WTC11 (cell line): ENCODE measurements at regions of chr5 and their contacts with region 1.

Region 1: GRCh38 chr5:141557681-141558136 is 61.1 kb downstream of the DIAPH1 start:
- DNase-seq: peak; percentile 85
- ATAC-seq: peak; percentile 57
- H3K4me3 Mint-ChIP-seq: peak overlapping the region; percentile 61
- H3K27ac Mint-ChIP-seq: peak overlapping the region; percentile 97
- H3K4me1 Mint-ChIP-seq: peaks cover 38% of the 10 kb centered on the region
- H3K27me3 Mint-ChIP-seq: no peaks in the 10 kb centered on the region
- CTCF ChIP-seq: peak; percentile 92

Region 2: DNA sequence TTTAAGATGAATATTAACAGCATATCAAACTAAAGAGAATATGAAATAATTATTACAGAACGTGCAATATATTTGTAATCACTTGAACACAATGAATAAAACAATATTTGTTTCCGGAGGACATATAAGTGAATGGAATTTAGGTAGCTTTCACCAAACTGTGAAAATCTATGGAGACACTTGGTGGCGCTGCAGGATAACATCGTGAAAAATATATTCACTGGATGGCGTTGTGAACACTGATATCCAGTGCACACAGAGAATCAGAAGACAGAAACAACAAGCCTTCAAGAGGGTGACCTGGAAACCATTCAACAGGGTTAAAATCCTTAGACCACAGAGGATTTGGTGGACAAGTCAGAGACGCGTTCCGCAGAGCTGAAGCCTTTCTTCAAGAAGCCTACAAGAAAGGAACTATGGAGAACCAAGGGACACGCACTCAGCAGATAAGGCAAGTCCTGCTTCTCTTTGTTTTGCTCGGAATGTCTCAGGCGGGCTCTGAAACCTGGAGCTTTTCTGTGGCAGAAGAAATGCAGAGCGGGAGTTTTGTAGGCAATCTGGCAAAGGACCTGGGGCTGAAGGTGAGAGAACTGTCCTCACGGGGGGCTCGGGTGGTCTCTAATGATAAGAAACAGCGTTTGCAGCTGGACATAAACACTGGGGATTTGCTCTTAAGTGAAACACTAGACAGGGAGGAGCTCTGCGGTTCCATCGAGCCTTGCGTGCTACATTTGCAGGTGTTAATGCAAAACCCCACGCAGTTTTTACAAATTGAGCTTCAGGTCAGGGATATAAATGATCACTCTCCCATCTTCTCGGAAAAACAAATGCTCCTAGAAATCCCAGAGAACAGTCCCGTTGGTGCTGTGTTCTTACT is 358.1 kb before region 1 on chr5 and contains the start of gene PCDHB11:
- CTCF ChIA-PET with region 1: interaction called, 12 read pairs
- POLR2A ChIA-PET with region 1: no interaction called
- DNase-seq: no peak
- ATAC-seq: peak; percentile 67
- H3K4me3 Mint-ChIP-seq: peak within 1 kb of the TSS; percentile 24
- H3K27ac Mint-ChIP-seq: no peak within 1 kb of the TSS
- H3K4me1 Mint-ChIP-seq: peaks cover 7% of the 10 kb centered on the region
- H3K27me3 Mint-ChIP-seq: no peaks in the 10 kb centered on the region; the same call in 1 of the 2 replicates
- CTCF ChIP-seq: peak; percentile 32; the same call in 1 of the 2 replicates
- total RNA-seq, gene PCDHB11: 0.61 to 1.2 TPM (median 0.92 TPM) in 3 replicates

Region 3: DNA sequence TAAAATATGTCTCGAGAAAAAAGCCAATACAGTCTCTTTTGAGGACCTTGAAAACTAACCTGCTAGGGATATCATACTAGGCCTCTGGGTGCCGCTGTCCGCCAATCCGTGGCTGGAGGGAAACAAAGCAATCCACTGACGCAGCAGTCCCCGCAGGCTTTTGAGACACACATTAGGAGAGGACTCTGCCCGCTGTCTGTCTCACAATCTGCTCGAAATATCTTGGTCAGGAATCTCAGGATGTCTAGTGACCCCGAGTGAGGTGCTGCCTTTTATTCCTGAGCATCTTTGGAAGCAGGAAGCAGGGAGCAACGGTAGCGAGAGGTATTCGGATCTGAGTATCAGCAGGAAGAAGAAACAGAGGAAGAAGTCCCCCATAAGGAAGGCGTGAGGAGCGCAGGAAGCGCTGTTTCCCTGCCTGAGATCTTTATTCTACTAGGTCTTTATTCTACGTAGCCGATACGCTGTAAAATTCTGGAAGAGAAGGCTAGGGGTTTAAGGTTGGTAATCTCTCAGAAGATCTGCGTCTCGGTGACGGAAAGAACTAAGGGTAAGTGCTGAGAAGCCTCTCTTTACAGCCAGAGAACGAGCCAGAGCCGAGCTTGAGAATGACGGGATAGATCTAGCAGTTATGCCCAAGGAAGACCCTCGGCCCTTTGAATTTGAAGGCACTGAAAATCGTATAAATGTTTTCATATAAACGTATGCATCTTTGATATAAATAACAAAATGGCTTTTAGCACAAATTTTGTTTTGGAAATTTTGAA is 231.4 kb before region 1 on chr5:
- CTCF ChIA-PET with region 1: interaction called, 10 read pairs
- POLR2A ChIA-PET with region 1: no interaction called
- DNase-seq: peak; percentile 76
- ATAC-seq: peak; percentile 91
- H3K4me3 Mint-ChIP-seq: peak overlapping the region; percentile 90
- H3K27ac Mint-ChIP-seq: peak overlapping the region; percentile 98
- H3K4me1 Mint-ChIP-seq: peaks cover 7% of the 10 kb centered on the region
- H3K27me3 Mint-ChIP-seq: peaks cover 12% of the 10 kb centered on the region
- CTCF ChIP-seq: peak; percentile 43; the same call in 1 of the 2 replicates

Region 4: GRCh38 chr5:141402553-141403260 is 155.0 kb before region 1 on chr5 and contains the start of gene PCDHGA9:
- CTCF ChIA-PET with region 1: interaction called, 24 read pairs
- POLR2A ChIA-PET with region 1: no interaction called
- DNase-seq: no peak
- ATAC-seq: no peak
- H3K4me3 Mint-ChIP-seq: no peak within 1 kb of the TSS
- H3K27ac Mint-ChIP-seq: no peak within 1 kb of the TSS
- H3K4me1 Mint-ChIP-seq: no peaks in the 10 kb centered on the region
- H3K27me3 Mint-ChIP-seq: peaks cover 14% of the 10 kb centered on the region
- CTCF ChIP-seq: no peak
- total RNA-seq, gene PCDHGA9: 1.9 to 2.9 TPM (median 2.3 TPM) in 3 replicates

Region 5: DNA sequence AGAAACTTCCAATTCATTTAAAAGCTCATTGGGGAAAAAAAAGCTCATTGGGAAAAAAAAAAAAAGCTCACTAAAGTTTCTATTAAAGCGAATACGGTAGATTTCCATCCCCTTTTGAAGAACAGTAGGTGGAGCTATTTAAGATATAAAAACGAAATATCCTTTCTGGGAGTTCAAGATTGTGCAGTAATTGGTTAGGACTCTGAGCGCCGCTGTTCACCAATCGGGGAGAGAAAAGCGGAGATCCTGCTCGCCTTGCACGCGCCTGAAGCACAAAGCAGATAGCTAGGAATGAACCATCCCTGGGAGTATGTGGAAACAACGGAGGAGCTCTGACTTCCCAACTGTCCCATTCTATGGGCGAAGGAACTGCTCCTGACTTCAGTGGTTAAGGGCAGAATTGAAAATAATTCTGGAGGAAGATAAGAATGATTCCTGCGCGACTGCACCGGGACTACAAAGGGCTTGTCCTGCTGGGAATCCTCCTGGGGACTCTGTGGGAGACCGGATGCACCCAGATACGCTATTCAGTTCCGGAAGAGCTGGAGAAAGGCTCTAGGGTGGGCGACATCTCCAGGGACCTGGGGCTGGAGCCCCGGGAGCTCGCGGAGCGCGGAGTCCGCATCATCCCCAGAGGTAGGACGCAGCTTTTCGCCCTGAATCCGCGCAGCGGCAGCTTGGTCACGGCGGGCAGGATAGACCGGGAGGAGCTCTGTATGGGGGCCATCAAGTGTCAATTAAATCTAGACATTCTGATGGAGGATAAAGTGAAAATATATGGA is 127.2 kb before region 1 on chr5 and contains the start of gene PCDHGA12:
- CTCF ChIA-PET with region 1: interaction called, 10 read pairs
- POLR2A ChIA-PET with region 1: no interaction called
- DNase-seq: no peak
- ATAC-seq: peak; percentile 43; the same call in 1 of the 2 replicates
- H3K4me3 Mint-ChIP-seq: no peak within 1 kb of the TSS
- H3K27ac Mint-ChIP-seq: no peak within 1 kb of the TSS
- H3K4me1 Mint-ChIP-seq: no peaks in the 10 kb centered on the region
- H3K27me3 Mint-ChIP-seq: no peaks in the 10 kb centered on the region
- CTCF ChIP-seq: no peak
- total RNA-seq, gene PCDHGA12: 1.6 to 2.1 TPM (median 1.9 TPM) in 3 replicates

Region 6: DNA sequence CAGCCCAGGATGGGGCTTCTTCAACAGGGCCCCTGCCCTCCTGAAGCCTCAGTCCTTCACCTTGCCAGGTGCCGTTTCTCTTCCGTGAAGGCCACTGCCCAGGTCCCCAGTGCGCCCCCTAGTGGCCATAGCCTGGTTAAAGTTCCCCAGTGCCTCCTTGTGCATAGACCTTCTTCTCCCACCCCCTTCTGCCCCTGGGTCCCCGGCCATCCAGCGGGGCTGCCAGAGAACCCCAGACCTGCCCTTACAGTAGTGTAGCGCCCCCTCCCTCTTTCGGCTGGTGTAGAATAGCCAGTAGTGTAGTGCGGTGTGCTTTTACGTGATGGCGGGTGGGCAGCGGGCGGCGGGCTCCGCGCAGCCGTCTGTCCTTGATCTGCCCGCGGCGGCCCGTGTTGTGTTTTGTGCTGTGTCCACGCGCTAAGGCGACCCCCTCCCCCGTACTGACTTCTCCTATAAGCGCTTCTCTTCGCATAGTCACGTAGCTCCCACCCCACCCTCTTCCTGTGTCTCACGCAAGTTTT is 45.3 kb before region 1 on chr5:
- CTCF ChIA-PET with region 1: interaction called, 44 read pairs
- POLR2A ChIA-PET with region 1: interaction called, 4 read pairs
- DNase-seq: peak; percentile 99
- ATAC-seq: peak; percentile 82
- H3K4me3 Mint-ChIP-seq: peak overlapping the region; percentile 87
- H3K27ac Mint-ChIP-seq: no peak overlapping the region
- H3K4me1 Mint-ChIP-seq: peaks cover 61% of the 10 kb centered on the region
- H3K27me3 Mint-ChIP-seq: no peaks in the 10 kb centered on the region
- CTCF ChIP-seq: peak; percentile 99

Region 7: DNA sequence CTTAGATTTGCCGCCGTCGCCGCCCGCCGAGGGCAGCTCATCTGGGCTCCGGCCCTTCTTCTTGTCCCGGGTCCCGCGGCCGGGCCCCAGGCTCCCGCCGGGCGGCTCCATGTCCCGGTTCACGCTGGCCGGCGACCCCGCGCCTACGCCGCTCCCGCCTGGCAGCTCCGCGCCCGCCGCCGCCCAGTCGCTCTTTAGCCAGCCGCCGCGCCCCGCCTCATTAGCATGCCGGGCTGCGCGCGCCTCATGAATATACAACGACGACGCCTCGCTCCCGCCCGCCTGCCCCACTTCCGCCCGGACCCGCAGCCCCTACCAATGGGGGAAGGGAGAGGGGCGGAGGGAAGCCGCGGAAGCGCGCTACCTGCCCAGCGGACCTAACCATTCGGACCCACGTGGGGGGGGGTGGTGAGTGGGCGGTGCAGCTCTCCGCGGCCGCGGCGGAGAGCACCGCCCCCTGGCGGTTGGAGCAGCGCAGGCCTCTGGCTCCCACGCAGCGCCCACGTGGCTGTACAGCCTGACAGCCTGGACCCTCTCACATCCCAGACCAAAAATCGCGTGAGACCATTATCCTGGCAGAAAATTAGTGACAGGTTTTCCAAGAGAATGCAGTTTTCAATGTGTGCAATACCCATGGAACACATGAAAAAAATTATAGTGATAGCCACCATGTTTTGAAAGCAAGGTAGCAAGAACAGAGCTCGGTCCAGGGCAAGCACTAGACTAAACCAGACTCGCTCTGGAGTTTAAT is 61.3 kb after region 1 on chr5 and contains the start of gene DIAPH1:
- CTCF ChIA-PET with region 1: interaction called, 10 read pairs
- POLR2A ChIA-PET with region 1: no interaction called
- DNase-seq: peak; percentile 97
- ATAC-seq: peak; percentile 94
- H3K4me3 Mint-ChIP-seq: peak within 1 kb of the TSS; percentile 95
- H3K27ac Mint-ChIP-seq: peak within 1 kb of the TSS; percentile 97
- H3K4me1 Mint-ChIP-seq: peaks cover 41% of the 10 kb centered on the region
- H3K27me3 Mint-ChIP-seq: no peaks in the 10 kb centered on the region; the same call in 1 of the 2 replicates
- CTCF ChIP-seq: peak; percentile 93
- total RNA-seq, gene DIAPH1: 90.9 to 109 TPM (median 96.0 TPM) in 3 replicates